MCF 10A (cell line): ENCODE measurements at regions of chrX and their contacts with region 1.

Region 1: DNA sequence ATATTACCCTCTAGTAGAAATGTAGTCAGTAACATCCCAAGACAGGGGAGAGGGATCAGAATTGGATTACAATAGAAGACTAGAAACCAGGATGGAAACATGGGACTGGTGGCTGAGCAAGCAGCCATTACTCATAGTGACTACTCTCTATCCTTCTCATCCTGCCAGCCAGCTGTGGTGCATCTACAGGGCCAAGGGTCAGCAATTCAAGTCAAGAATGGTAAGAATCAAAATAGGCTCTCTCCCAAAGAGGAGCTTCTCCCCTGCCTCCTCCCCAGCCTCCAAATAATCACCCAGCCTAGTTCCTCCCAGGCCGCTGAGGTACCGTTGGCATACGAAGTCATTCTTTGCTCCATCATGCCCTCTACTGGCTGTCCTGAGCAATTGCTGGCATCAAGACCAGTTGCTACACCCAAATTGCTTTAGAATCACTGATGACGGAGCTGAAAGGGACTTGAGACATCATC is 19.4 kb downstream of the AWAT2 start:
- DNase-seq: peak; percentile 78
- H3K4me3 Mint-ChIP-seq: no peak overlapping the region
- H3K27ac Mint-ChIP-seq: no peak overlapping the region
- H3K4me1 Mint-ChIP-seq: peaks cover 5% of the 10 kb centered on the region
- H3K27me3 Mint-ChIP-seq: peaks cover 47% of the 10 kb centered on the region
- CTCF ChIP-seq: peak; percentile 77

Region 2: DNA sequence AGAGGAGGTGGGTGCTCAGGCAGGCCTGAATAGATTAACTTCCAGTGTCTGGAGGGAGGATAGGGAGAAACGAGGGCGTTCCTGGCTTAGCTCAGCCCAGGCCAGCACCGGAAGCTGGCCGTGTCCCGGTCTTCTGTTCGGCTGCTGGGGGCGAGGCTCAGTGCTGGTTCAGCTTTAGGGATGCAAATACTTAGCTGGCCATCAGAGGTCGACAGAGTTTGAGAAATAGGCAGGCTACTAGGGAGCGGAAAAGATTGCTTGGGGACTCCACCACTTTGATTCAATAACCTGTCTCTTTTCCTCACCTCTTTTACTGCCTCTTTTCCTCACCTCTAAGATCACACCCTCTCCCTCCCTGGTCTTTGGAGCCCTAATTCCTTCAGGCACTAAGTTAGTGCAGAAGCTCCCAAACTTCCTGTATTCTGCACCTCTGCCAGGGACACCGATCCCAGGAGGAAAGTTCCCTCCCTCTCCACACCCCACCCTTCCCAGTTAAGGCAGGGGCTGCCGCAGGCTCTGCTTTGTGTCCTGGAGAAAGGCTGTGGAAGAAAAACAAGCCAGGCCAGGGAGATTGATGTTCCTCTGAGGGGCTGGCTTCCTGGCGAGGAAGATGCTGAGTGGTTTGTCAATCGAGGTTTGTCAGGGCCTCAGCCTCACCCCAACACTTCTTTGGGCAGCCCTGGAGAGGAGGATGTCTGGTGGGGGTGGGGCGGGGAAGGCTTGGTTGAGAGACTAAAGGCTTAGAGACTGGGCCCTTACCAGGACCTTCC is 1207.5 kb before region 1 on chrX:
- CTCF ChIA-PET with region 1: no interaction called
- POLR2A ChIA-PET with region 1: no interaction called
- intact Hi-C with region 1: loop called (anchors 5 kb)
- DNase-seq: peak; percentile 65
- H3K4me3 Mint-ChIP-seq: no peak overlapping the region
- H3K27ac Mint-ChIP-seq: no peak overlapping the region
- H3K4me1 Mint-ChIP-seq: peaks cover 11% of the 10 kb centered on the region
- H3K27me3 Mint-ChIP-seq: peaks cover 40% of the 10 kb centered on the region
- CTCF ChIP-seq: peak; percentile 76

Region 3: DNA sequence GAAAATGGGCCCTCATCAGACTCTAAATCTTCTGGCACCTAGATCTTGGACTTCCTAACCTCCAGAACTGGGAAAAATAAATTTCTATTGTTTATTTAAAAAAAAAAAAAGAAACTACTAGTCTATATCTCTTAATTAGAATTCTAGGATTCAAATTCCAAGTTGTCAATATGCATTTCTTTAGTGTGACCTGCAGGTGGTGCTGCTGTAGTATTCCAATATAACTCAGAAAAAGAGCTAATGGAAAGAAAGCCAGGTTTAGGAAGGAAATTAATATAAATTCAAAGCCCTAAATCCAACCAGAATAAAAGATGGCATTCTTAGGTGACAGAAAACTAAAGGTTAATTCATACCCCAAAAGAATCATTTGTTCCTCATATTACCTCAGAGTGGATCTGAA is 606.2 kb before region 1 on chrX:
- CTCF ChIA-PET with region 1: interaction called, 4 read pairs
- POLR2A ChIA-PET with region 1: no interaction called
- intact Hi-C with region 1: loop called (anchors 1 kb)
- DNase-seq: peak; percentile 27
- H3K4me3 Mint-ChIP-seq: no peak overlapping the region
- H3K27ac Mint-ChIP-seq: no peak overlapping the region
- H3K4me1 Mint-ChIP-seq: no peaks in the 10 kb centered on the region
- H3K27me3 Mint-ChIP-seq: peaks cover 62% of the 10 kb centered on the region
- CTCF ChIP-seq: peak; percentile 36

Region 4: GRCh38 chrX:69493193-69493592 is 537.1 kb before region 1 on chrX:
- CTCF ChIA-PET with region 1: interaction called, 14 read pairs
- POLR2A ChIA-PET with region 1: no interaction called
- intact Hi-C with region 1: loop called (anchors 1 kb)
- DNase-seq: peak; percentile 71
- H3K4me3 Mint-ChIP-seq: no peak overlapping the region
- H3K27ac Mint-ChIP-seq: no peak overlapping the region
- H3K4me1 Mint-ChIP-seq: peaks cover 7% of the 10 kb centered on the region
- H3K27me3 Mint-ChIP-seq: peaks cover 66% of the 10 kb centered on the region
- CTCF ChIP-seq: peak; percentile 69

Region 5: DNA sequence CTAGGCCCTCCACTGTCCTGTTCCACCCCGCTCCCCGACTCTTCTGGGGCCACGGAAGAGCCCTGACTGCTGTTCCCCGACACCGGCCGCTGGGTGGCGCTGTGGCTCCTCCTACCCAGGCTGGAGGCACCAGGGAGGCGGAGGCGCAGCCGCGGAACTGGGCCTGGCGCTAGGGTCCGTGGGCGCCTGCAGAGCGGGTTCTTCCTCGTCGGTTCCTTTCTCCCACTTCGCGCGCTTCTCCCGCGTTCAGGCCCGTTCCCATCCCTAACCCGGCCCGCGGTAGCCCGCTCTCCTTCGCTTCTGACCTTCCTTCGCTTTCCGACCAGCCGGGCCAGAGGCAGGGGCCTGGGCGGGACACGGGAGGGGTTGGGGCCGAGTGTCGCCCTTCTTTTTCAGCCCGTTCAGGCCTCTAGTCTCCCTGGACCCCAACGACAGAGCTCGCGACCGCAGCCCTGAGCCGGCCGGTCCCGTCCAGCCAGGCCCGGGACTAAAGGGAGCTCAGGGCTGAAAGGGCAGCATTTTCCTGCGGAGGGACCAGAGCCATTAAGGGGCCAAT is 491.9 kb before region 1 on chrX:
- CTCF ChIA-PET with region 1: interaction called, 69 read pairs
- POLR2A ChIA-PET with region 1: no interaction called
- intact Hi-C with region 1: loop called (anchors 1 kb)
- DNase-seq: peak; percentile 63
- H3K4me3 Mint-ChIP-seq: peak overlapping the region; percentile 56
- H3K27ac Mint-ChIP-seq: peak overlapping the region; percentile 36
- H3K4me1 Mint-ChIP-seq: no peaks in the 10 kb centered on the region
- H3K27me3 Mint-ChIP-seq: peaks cover 31% of the 10 kb centered on the region
- CTCF ChIP-seq: peak; percentile 79

Region 6: GRCh38 chrX:70012756-70013155 is 17.6 kb before region 1 on chrX:
- CTCF ChIA-PET with region 1: interaction called, 13 read pairs
- POLR2A ChIA-PET with region 1: no interaction called
- intact Hi-C with region 1: no loop called
- DNase-seq: no peak
- H3K4me3 Mint-ChIP-seq: no peak overlapping the region
- H3K27ac Mint-ChIP-seq: no peak overlapping the region
- H3K4me1 Mint-ChIP-seq: no peaks in the 10 kb centered on the region
- H3K27me3 Mint-ChIP-seq: peaks cover 25% of the 10 kb centered on the region
- CTCF ChIP-seq: no peak